Dorsolateral prefrontal cortex (tissue), 120 donors: ENCODE measurements at regions of chr17 and their contacts with region 1.

Region 1: GRCh38 chr17:35063514-35064223 is at the start of gene RFFL:
- DNase-seq: peak; percentile 53 to 96 (median 90)
- H3K4me3 ChIP-seq: peak within 1 kb of the TSS in 55 of 59 donors; percentile 2 to 58 (median 36)
- H3K27ac ChIP-seq: peak within 1 kb of the TSS; percentile 84 to 100 (median 97)
- H3K27me3 ChIP-seq: no peaks in the 10 kb centered on the region
- CTCF ChIP-seq: peak in 49 of 56 donors; percentile 17 to 67 (median 42)
- total RNA-seq, gene RFFL: 18.0 to 137 (median 45.5) TPM

Region 2: DNA sequence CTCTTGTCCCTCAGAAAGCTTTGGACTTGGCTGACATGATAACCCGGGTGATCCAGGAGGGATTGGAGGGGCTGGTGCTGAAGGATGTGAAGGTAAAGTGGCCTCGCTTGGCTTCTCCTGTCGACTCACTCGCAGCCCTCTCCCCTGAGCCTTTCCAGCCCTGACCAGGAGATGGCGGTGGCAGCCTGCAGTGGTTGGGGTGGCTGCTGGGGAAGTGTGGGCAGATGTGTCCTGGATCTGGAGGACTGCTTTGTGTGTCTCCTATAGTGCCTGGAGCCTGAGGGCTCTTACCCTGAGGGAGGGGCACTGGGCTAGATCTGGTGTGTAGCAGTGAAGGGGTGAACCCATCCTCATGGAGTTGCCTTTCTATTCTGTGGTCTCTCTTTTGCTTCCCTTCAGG is 65.5 kb before region 1 on chr17:
- intact Hi-C with region 1: loop called in 1 of 2 experiments (anchors 2 kb)
- DNase-seq: peak in 9 of 10 donors; percentile 69 to 85 (median 75)
- H3K4me3 ChIP-seq: peak overlapping the region in 1 of 59 donors; percentile 2
- H3K27ac ChIP-seq: peak overlapping the region in 58 of 59 donors; percentile 0 to 100 (median 79)
- H3K27me3 ChIP-seq: no peaks in the 10 kb centered on the region
- CTCF ChIP-seq: peak in 55 of 56 donors; percentile 44 to 93 (median 80)

Region 3: GRCh38 chr17:35022536-35023063 is 41.1 kb before region 1 on chr17:
- intact Hi-C with region 1: loop called in 1 of 2 experiments (anchors 2 kb)
- DNase-seq: peak; percentile 29 to 95 (median 92)
- H3K4me3 ChIP-seq: peak overlapping the region in 11 of 59 donors; percentile 4 to 21 (median 12)
- H3K27ac ChIP-seq: peak overlapping the region; percentile 22 to 100 (median 97)
- H3K27me3 ChIP-seq: no peaks in the 10 kb centered on the region
- CTCF ChIP-seq: peak in 20 of 56 donors; percentile 6 to 48 (median 22)

Region 4: GRCh38 chr17:35028531-35029262 is 35.0 kb before region 1 on chr17:
- intact Hi-C with region 1: loop called (anchors 2 kb)
- DNase-seq: no peak
- H3K4me3 ChIP-seq: no peak overlapping the region
- H3K27ac ChIP-seq: peak overlapping the region; percentile 25 to 100 (median 88)
- H3K27me3 ChIP-seq: no peaks in the 10 kb centered on the region
- CTCF ChIP-seq: no peak

Region 5: GRCh38 chr17:35094902-35095301 is 31.2 kb after region 1 on chr17:
- intact Hi-C with region 1: no loop called
- DNase-seq: no peak
- H3K4me3 ChIP-seq: no peak overlapping the region
- H3K27ac ChIP-seq: no peak overlapping the region
- H3K27me3 ChIP-seq: no peaks in the 10 kb centered on the region
- CTCF ChIP-seq: no peak